A673 (cell line): ENCODE measurements at regions of chr4 and their contacts with region 1.

Region 1: GRCh38 chr4:163554870-163555465 is 60.5 kb downstream of the TMA16 start:
- DNase-seq: peak; percentile 65
- H3K4me3 ChIP-seq: no peak overlapping the region
- H3K27ac ChIP-seq: no peak overlapping the region
- H3K4me1 ChIP-seq: peaks cover 15% of the 10 kb centered on the region
- H3K27me3 ChIP-seq: no peaks in the 10 kb centered on the region
- CTCF ChIP-seq: peak; percentile 82

Region 2: DNA sequence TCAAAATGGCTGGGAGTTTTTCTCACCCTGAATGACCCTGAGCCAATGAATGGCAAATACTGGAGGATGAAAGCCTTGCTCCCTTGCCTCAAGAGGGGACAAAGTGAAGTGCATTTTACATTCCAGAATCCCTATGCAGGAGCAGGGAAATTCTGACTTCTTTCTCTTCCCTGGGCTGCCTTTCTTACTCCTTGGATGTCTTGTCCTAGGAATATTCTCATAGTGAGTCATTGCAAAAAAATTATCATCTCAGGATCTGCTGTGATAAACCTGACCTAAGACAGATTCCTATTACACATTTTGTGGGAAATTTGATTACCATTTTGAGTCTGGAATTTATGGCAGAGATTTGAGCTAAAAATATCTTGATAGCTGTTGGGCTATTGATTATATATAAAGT is 139.4 kb after region 1 on chr4:
- CTCF ChIA-PET with region 1: no interaction called
- POLR2A ChIA-PET with region 1: no interaction called
- intact Hi-C with region 1: no loop called
- DNase-seq: no peak
- H3K4me3 ChIP-seq: no peak overlapping the region
- H3K27ac ChIP-seq: no peak overlapping the region
- H3K4me1 ChIP-seq: no peaks in the 10 kb centered on the region
- H3K27me3 ChIP-seq: no peaks in the 10 kb centered on the region
- CTCF ChIP-seq: no peak

Region 3: DNA sequence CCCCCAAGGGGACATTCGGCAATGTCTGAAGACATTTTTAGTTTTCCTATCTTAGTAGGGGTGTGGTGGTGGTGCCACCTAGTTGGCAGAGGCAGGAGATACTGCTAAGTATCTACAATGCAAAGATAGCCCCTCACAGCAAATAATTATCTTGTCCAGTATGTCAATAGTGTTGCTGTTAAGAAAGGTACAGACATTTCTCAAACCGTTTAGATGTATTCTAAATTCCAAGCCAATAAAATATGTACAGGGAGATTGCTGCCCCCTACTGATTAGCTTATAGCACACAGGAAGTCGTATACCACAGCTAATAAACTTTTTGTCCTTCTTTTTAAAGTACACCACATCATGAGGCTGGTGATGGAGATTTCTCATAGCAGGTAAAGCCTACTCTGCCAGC is 200.0 kb after region 1 on chr4:
- CTCF ChIA-PET with region 1: interaction called, 5 read pairs
- POLR2A ChIA-PET with region 1: no interaction called
- intact Hi-C with region 1: loop called (anchors 1 kb)
- DNase-seq: peak; percentile 81
- H3K4me3 ChIP-seq: no peak overlapping the region
- H3K27ac ChIP-seq: no peak overlapping the region
- H3K4me1 ChIP-seq: peaks cover 11% of the 10 kb centered on the region
- H3K27me3 ChIP-seq: no peaks in the 10 kb centered on the region
- CTCF ChIP-seq: peak; percentile 70

Region 4: DNA sequence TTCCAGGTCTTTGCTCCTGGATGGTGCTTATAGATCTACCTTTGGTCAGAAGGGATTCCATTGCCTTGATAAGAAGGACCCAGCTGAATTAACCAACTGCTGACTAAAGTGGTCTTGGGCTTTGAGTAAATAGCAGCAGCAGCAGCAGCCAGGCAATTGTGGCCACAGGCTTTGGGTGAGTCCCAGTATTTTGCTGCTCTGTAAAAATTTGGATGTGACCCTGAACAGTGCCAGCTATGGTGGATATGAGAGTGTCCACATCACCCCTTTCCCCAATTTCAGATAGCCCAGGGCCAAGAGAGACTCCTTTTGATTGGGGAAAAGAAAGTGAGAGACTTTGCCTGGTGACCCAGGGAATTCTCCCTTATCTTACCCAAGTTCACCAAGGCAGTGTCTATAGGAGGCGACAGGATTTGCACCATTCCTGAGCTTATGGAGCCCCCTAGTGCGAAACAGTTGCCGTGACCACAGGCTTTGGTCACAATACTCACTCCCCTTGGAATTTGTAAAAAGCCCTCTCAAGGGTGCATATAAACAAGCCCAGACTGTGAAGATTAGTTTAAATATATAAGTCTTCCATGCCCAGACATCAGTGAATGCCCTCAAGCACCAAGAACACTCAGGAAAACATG is 457.5 kb after region 1 on chr4:
- CTCF ChIA-PET with region 1: interaction called, 10 read pairs
- POLR2A ChIA-PET with region 1: no interaction called
- intact Hi-C with region 1: loop called (anchors 1 kb)
- DNase-seq: peak; percentile 82
- H3K4me3 ChIP-seq: no peak overlapping the region
- H3K27ac ChIP-seq: peak overlapping the region; percentile 8
- H3K4me1 ChIP-seq: peaks cover 7% of the 10 kb centered on the region
- H3K27me3 ChIP-seq: no peaks in the 10 kb centered on the region
- CTCF ChIP-seq: peak; percentile 82

Region 5: DNA sequence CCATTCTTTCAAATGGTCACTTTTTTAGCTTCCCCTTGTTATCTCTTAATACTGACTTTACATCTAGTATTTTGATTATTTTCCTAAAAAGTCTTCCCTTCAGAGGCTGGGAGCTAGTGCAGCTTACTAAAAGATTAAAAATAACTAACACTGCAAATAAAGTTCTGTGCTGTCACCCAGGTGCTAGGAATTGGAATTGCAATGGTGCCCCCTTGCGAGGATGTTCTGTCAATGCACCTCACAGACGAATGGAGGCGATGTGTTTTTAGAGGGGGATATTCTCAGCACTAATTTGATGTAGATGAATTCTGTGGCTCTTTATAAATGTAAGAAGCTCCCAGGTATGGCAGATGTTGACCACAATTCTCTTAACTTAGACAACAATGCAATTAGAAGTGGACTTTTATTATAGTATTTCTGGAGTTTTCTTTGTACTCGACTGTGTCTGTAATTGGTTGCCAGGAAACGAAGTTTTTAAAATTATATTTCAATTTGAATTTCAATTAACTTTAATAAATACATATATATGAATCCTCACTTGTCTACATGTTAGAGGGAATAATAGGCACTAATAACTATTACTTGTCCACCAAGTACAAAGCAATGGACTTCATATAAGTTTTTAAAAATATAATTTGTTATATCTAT is 1177.0 kb after region 1 on chr4:
- CTCF ChIA-PET with region 1: interaction called, 7 read pairs
- POLR2A ChIA-PET with region 1: no interaction called
- intact Hi-C with region 1: loop called (anchors 5 kb)
- DNase-seq: peak; percentile 85
- H3K4me3 ChIP-seq: no peak overlapping the region
- H3K27ac ChIP-seq: peak overlapping the region; percentile 34
- H3K4me1 ChIP-seq: peaks cover 25% of the 10 kb centered on the region
- H3K27me3 ChIP-seq: no peaks in the 10 kb centered on the region
- CTCF ChIP-seq: peak; percentile 93

Region 6: DNA sequence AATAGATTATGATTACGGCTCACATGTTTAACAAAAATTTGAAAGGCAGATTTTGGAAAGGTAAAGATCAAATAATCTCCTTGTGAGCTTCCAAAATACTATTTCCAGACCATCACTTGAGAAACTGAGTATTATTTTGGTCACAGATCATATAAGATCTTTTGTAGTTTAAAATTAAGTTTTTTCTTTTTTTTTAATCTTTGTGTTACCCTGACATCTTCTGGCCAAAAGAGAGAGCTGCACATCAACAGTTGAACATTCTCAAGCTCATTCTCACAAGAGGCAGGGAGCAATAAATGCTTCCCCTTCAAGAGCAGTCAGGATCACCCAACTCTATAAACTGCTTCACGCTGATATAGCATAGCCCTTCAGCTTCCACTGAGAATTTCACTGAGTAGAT is 1541.8 kb after region 1 on chr4:
- CTCF ChIA-PET with region 1: interaction called, 7 read pairs
- POLR2A ChIA-PET with region 1: no interaction called
- intact Hi-C with region 1: loop called (anchors 10 kb)
- DNase-seq: peak; percentile 52
- H3K4me3 ChIP-seq: no peak overlapping the region
- H3K27ac ChIP-seq: no peak overlapping the region
- H3K4me1 ChIP-seq: no peaks in the 10 kb centered on the region
- H3K27me3 ChIP-seq: no peaks in the 10 kb centered on the region
- CTCF ChIP-seq: peak; percentile 71